Posterior cingulate gyrus (tissue), 11 donors: ENCODE measurements at regions of chr1 and their contacts with region 1.

Region 1: DNA sequence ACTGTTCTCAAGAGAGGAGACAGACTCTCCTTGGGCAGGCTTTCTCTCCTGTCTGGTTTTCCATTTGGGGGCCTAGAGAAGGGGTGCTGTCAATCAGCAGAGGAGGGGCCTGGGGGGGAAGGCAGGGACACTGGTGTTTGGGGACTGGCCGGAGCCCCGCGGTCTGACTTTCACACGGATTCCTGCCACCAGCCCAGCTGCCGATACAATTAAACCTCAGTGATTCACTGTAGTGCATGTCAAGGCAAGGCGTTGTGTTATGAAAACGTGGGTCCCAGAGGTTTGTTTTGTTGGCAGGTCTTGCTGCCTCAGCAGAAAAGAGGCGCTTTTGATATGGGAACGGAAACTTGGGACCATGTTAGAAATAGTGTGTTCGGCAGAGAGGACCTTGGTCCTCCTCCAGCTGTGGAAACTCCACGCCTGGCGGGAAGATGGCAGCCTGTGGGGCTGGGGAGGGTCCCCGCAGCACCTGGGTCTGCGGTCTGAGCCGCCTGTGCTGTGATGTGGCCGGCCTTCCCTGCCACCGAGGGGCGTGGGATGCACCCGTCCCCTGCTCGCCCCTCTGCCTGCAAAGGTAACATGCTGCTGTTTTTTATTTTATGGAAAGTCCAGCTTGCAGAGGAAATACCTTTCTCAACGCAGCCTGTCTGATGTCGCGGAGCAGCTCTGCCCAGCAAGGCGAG is 47.6 kb downstream of the SPSB1 start:
- DNase-seq: peak in 1 of 10 donors; percentile 83

Region 2: DNA sequence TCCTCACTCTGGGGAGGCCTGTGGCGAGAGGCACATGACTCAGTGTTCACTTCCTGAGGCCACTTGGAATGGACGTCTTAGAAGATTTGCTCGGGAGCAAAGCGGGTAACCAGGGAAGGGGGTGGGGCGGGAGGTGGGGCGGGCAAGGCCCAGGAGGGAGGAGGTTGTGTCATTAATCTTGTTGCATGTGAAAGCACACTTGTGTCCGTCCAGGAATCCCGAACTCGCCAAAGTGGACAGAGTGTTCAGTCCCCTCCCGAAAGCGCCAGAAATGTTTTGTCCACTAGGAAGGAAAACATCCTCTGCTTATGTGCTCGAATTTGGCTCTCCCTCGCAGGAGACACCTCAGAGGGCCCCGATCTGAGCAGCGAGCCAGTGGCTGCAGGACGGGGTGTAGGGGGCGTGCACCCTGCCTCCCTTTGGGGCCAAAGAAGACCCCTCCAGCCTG is 36.6 kb after region 1 on chr1:
- intact Hi-C with region 1: loop called (anchors 5 kb)
- DNase-seq: no peak